ENCODE measurements at regions of chr2 and their contacts with region 1.

Region 1: GRCh38 chr2:120343433-120344105 is 2.4 kb upstream of the INHBB start:
- DNase-seq: peak; percentile 79 to 89 (median 86)
- H3K4me3 ChIP-seq: peak overlapping the region in 1 of 4 donors; percentile 66
- H3K27ac ChIP-seq: peak overlapping the region in 1 of 5 donors; percentile 70
- H3K4me1 ChIP-seq: peaks cover 22 to 33% of the 10 kb centered on the region in 2 donors
- H3K27me3 ChIP-seq: peaks cover 40% of the 10 kb centered on the region
- CTCF ChIP-seq: peak; percentile 69 to 91 (median 80)
- POLR2A ChIP-seq: no peak

Region 2: DNA sequence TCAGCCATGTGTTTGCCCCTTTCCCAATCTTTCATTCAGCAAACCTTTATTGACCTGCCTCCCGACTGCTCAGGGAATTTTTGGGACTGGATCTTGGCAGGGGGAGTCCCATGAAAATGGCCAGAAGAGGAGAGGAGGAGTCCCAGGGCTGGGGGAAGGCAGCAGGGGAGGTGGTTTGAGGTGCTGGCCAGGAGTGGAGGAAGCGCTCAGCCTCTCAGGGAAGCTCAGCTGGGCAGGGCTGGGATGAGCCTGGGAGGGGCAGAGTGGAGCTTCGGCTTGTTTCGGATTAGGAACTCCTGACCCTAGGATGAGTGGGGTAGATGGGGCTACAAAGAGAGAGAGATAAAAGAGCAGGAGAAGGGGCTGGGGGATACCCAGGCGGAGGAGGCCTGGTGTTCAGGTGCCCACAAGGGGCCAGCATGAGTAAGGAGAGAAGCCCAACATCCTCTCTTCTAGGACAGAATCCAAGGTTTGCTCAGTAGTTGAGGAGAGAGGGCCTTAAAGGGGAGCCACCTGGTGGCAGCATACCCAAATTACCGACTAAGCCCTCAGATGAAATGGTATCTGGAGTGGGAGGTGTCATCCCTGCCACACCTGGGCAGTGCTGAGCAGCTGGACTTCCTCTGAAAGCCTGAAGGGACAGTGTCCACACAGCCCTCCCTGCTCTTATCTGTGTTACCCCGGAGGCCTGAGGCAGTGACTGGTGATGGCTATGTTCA is 93.5 kb after region 1 on chr2:
- intact Hi-C with region 1: loop called in 1 of 2 experiments (anchors 5 kb)
- DNase-seq: peak in 5 of 7 donors; percentile 41 to 65 (median 53)
- H3K4me3 ChIP-seq: no peak overlapping the region
- H3K27ac ChIP-seq: peak overlapping the region in 2 of 5 donors; percentile 54 to 66
- H3K4me1 ChIP-seq: no peaks in the 10 kb centered on the region
- H3K27me3 ChIP-seq: no peaks in the 10 kb centered on the region
- CTCF ChIP-seq: peak in 5 of 6 experiments; percentile 19 to 58 (median 46)
- POLR2A ChIP-seq: no peak

Region 3: GRCh38 chr2:120520929-120521912 is 177.7 kb after region 1 on chr2:
- intact Hi-C with region 1: loop called (anchors 10 kb)
- DNase-seq: peak in 6 of 7 donors; percentile 41 to 76 (median 59)
- H3K4me3 ChIP-seq: no peak overlapping the region
- H3K27ac ChIP-seq: peak overlapping the region in 1 of 5 donors; percentile 17
- H3K4me1 ChIP-seq: peaks cover 6 to 19% of the 10 kb centered on the region in 2 donors
- H3K27me3 ChIP-seq: no peaks in the 10 kb centered on the region
- CTCF ChIP-seq: peak; percentile 69 to 89 (median 72)
- POLR2A ChIP-seq: no peak

Region 4: DNA sequence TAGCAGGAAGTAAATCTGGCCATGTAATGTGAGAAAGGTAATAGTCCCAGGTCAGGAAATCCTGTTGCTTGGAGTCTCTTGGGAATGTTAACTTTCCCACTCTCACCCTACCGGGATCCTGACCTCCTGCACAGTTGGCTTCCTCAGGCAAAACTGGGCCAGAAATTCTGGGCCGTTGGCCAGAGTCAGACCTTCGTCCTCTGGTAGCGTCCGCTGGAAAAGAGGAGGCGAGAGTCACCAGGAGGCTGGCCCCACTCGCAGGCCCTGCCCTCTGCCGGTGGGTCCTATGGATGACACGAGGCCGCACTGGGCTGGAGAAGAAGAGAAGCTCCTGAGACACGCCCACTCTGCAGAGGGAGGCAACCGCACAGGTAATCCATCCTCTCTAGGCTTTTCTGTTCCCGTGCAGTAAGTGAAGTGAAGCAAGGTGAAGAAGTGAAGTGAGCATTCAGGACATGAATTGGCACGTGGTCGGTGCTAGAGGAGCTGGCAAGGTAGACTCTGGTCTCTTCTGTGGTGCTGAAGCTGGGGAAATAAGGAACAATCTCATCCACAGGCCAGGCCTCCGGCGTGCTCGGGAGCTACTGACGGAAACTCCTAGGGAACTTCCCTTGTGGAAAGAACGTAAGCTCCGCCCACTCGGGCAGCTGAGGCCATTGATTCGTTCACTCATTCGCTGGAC is 209.4 kb after region 1 on chr2:
- intact Hi-C with region 1: loop called in 1 of 2 experiments (anchors 10 kb)
- DNase-seq: peak; percentile 90 to 96 (median 94)
- H3K4me3 ChIP-seq: no peak overlapping the region
- H3K27ac ChIP-seq: peak overlapping the region in 2 of 5 donors; percentile 22 to 56
- H3K4me1 ChIP-seq: peaks cover 23 to 27% of the 10 kb centered on the region in 2 donors
- H3K27me3 ChIP-seq: no peaks in the 10 kb centered on the region
- CTCF ChIP-seq: peak; percentile 73 to 89 (median 88)
- POLR2A ChIP-seq: no peak

Region 5: DNA sequence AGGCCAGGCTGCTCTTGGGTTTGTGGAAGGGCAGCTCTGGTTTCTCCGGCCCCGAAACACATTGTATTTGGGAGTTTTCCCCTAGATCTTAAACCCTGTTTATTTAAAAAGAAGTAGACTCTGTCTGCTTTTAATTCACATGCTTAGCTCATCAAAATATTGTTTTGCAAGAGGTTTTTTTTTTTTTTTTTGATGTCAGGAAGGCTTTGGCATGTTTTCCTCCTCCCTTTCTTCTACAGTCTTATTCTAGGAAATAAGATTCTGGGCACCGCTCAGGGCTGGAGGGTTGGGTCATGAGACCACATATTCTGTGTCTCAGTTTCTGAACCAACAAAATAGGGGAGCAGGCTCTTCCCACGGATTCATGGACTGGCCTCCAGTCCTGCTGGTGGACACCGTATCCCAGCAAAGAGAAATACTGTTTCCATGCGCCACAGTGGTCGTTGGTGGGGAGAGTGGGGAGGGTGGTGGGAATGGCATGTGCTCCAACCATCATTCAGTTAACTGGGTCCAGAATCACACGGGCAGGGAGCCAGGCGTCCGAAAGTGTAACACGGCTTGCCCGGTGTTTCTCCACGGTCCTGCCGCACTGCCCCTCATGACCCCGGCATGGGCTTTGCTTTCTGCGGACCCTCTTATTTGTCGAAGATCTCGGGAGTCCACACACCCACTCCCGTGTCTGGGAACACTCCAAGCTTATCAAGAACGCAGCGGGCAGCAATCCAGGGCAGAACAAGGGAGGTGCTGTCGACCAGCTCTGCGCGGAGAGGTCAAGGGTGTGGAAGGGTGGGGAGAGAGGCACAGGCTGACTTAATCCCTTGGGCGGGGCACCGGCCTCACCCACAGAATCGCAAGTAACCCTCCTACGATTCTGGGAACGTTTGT is 568.8 kb after region 1 on chr2:
- intact Hi-C with region 1: no loop called
- DNase-seq: peak in 1 of 7 donors; percentile 41
- H3K4me3 ChIP-seq: no peak overlapping the region
- H3K27ac ChIP-seq: peak overlapping the region in 2 of 5 donors; percentile 17 to 86
- H3K4me1 ChIP-seq: peaks cover 14 to 22% of the 10 kb centered on the region in 2 donors
- H3K27me3 ChIP-seq: no peaks in the 10 kb centered on the region
- CTCF ChIP-seq: no peak
- POLR2A ChIP-seq: no peak

Measured in adrenal gland (tissue), 19 donors.